ENCODE measurements at regions of chr12 and their contacts with region 1.

Region 1: GRCh38 chr12:2501464-2502191 is 293.1 kb upstream of the FKBP4 start:
- DNase-seq: no peak
- ATAC-seq: no peak
- H3K4me3 ChIP-seq: no peak overlapping the region
- H3K4me3 Mint-ChIP-seq: no peak overlapping the region
- H3K27ac ChIP-seq: no peak overlapping the region
- H3K27ac Mint-ChIP-seq: no peak overlapping the region
- H3K4me1 ChIP-seq: no peaks in the 10 kb centered on the region
- H3K4me1 Mint-ChIP-seq: peaks cover 8% of the 10 kb centered on the region
- H3K27me3 ChIP-seq: no peaks in the 10 kb centered on the region
- H3K27me3 Mint-ChIP-seq: peaks cover 23% of the 10 kb centered on the region
- CTCF ChIP-seq: no peak

Region 2: DNA sequence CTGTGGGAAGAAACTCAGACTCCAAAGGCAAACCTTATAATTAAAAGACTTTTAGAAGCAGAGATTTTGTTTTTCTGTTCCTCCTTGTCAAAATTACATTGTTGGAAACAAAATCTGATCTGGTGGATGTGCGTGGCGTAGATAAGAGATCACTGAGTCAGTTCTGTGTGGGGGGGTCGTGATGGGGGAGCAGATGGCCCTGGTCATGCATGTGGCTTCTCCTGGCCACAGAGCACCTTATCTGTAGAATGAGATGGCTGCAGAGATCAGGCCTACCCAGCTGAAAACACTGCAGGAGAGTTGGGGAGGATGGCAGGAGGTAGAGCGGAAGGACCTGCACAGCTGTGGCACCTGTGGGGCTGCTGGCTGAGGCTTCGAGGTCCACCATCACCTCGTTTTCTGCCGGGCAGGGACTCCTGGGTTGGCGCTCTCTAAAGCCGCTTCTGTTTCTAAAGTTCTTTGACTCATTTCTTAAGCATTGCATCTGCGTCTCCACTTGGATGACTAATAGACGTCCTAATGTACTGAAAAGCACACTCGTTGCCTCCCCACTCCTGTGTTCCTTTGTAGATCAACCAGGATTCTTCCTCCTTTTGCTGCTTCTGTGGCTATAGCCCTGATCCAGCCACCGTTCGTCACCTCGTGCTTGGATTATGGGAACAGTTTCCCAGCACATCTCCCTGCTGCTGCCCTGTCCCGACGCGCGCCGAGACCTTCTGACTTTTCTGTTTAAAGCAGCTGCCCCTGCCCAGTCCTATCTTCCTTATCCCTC is 669.0 kb after region 1 on chr12:
- CTCF ChIA-PET with region 1: no interaction called
- POLR2A ChIA-PET with region 1: no interaction called
- intact Hi-C with region 1: loop called in 1 of 2 experiments (anchors 10 kb)
- DNase-seq: no peak
- ATAC-seq: no peak
- H3K4me3 ChIP-seq: no peak overlapping the region
- H3K4me3 Mint-ChIP-seq: no peak overlapping the region
- H3K27ac ChIP-seq: no peak overlapping the region
- H3K27ac Mint-ChIP-seq: no peak overlapping the region
- H3K4me1 ChIP-seq: no peaks in the 10 kb centered on the region
- H3K4me1 Mint-ChIP-seq: peaks cover 2% of the 10 kb centered on the region
- H3K27me3 ChIP-seq: no peaks in the 10 kb centered on the region
- H3K27me3 Mint-ChIP-seq: peaks cover 17% of the 10 kb centered on the region
- CTCF ChIP-seq: no peak